OCI-LY7 (cell line): ENCODE measurements at regions of chr9 and their contacts with region 1.

Region 1: DNA sequence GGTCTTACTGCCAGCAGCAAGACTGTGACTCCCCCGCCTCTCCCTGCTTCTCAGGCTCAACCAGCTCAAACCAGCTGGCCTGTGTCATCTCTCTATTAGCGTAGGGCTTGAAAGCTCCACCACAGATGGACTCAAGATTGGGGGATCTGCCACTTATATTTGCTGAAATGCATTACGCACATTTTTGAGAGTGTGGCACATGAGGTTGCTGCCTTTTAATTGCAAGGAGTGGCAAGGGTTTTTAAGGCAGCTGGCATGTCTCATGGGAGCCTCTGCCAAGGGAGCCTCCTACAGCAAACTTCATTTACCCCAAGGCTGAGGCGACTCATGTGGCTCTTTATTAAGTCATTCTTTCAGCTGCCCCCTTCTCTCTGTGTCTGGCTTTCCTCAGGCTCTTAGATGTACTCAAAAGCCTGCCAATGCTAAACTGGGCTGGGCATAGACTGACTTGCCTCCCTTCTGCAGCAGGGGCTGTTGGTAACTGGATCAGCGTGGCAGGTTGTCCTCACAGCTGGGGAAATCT is 219.3 kb downstream of the SMARCA2 start:
- DNase-seq: no peak
- H3K4me3 ChIP-seq: no peak overlapping the region
- H3K27ac ChIP-seq: no peak overlapping the region
- H3K4me1 ChIP-seq: peaks cover 8% of the 10 kb centered on the region
- CTCF ChIP-seq: no peak

Region 2: DNA sequence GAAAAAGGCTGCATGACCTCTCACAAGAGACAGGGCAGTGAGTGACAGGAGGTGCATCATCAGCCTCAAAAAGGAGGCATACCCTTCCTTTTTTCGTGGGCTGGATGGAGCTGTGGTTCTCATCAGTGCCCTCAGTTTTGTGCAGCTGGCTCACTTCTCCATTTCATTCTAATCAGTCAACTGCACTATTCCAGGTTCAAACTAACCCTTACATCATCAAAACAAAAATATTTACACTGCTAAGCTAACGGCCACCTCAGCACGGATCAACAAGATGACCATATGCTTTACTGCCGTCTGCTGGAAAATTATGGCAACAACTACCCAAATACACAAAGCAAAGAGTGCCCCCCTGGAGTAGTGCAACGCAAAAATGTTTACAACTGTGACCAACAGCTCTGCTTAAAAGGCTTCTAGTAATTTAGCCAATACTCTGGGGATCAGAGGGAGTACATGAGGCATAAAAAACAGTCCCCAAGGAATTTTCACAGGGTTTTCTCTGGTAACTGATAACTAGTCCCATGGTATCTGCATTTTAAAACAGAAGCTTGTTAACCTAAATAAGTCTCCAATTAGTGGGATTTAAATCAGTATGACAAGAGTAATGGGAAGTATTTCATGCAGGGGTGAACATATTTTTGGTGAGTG is 493.7 kb after region 1 on chr9:
- CTCF ChIA-PET with region 1: no interaction called
- POLR2A ChIA-PET with region 1: no interaction called
- intact Hi-C with region 1: loop called (anchors 10 kb)
- DNase-seq: peak; percentile 52
- H3K4me3 ChIP-seq: no peak overlapping the region
- H3K27ac ChIP-seq: no peak overlapping the region
- H3K4me1 ChIP-seq: peaks cover 7% of the 10 kb centered on the region
- CTCF ChIP-seq: peak; percentile 75